GM10248 (cell line): ENCODE measurements at regions of chr6 and their contacts with region 1.

Region 1: DNA sequence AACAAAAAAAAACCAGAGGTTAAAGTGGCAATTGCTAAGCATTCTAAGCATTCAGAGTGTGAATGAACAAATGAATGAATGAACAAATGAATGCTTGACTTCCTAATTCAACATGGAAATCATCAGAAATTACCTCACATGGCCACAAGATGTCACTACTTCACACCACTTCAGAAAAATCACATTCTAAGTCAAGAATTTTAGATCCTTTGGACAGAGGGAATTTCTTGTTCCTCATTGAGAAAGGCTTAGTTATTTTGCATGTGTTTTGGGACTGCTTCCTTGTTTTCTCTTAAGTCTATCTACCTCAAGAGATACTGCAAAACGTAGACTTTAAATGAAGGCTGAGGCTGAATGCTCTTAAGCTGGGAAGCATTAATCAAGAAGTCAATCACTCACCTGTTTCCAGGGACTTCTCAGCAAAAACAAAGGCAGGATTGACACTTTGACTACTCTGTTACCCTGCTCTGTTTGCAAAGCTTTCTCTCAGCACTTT is 120.2 kb downstream of the MBOAT1 start:
- DNase-seq: no peak
- CTCF ChIP-seq: peak; percentile 58

Region 2: DNA sequence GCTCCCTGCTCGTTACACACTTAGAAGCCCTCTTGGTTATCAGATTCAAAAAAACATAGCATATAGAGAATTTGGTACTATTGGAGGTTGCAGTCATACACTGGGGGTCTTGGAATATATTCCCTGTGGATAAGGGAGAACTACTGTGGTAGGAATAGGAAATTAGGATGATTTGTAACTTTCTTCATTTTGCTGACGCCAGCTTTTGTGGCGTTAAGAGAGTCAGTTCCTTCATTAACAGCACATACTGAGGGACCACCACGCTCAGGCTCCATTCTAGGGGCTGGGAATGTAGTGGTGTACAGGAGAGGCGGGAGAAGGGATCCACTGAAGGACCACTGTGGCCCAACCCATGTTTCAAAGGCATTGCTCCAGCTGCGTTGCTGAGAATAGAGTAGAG is 20.1 kb before region 1 on chr6:
- CTCF ChIA-PET with region 1: interaction called, 10 read pairs
- POLR2A ChIA-PET with region 1: no interaction called
- DNase-seq: no peak
- CTCF ChIP-seq: no peak

Region 3: GRCh38 chr6:20109526-20109925 is 17.4 kb after region 1 on chr6:
- CTCF ChIA-PET with region 1: interaction called, 10 read pairs
- POLR2A ChIA-PET with region 1: no interaction called
- DNase-seq: no peak
- CTCF ChIP-seq: no peak

Region 4: GRCh38 chr6:20117474-20117873 is 25.4 kb after region 1 on chr6:
- CTCF ChIA-PET with region 1: interaction called, 63 read pairs
- POLR2A ChIA-PET with region 1: no interaction called
- DNase-seq: peak; percentile 45
- CTCF ChIP-seq: no peak